ENCODE measurements at regions of chr3 and their contacts with region 1.

Region 1: DNA sequence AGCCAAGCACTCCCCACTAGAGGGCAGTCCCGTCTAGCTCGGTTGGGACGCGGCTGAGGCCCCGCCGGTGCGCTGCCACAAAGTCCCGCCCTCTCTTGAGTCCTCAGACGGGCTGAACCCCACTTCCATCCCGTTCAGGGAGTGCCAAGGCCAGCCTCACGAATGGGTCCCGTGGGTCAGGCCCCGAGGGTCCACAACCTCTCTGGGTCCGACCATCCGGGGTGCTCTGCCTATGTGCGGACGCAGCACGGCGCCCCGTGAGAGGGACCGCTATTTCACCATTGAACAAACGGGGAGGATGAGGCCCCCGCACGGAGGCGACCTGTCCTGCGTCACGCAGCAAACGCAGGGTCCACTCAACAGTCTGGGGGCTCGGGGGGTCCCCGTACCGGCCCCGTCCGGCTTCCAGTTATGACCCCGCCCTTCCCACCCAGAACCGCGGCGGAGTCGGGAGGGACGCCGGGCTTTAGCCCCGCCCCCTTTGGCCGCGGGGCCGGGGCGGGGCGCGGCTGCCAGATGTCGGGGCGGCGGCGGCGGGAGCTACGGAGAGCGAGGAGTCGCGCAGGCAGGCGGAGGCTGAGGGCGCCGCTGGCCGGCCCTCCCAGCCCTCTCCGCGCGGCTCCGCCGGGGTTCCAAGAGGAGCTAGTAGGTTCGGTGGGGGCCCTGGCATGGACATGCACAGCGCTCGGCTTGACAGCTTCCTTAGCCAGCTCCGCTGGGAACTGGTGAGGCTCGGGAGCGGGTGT is at the start of gene INKA1:
- DNase-seq: peak; percentile 95
- ATAC-seq: peak; percentile 90
- H3K4me3 ChIP-seq: peak within 1 kb of the TSS; percentile 91
- H3K27ac ChIP-seq: peak within 1 kb of the TSS; percentile 87
- H3K4me1 ChIP-seq: peaks cover 42% of the 10 kb centered on the region
- H3K27me3 ChIP-seq: no peaks in the 10 kb centered on the region
- CTCF ChIP-seq: peak; percentile 6
- total RNA-seq, gene INKA1: 6.6 TPM

Region 2: GRCh38 chr3:49519296-49519695 is 283.6 kb before region 1 on chr3:
- intact Hi-C with region 1: no loop called
- DNase-seq: no peak
- ATAC-seq: no peak
- H3K4me3 ChIP-seq: no peak overlapping the region
- H3K27ac ChIP-seq: no peak overlapping the region
- H3K4me1 ChIP-seq: peaks cover 16% of the 10 kb centered on the region
- H3K27me3 ChIP-seq: no peaks in the 10 kb centered on the region
- CTCF ChIP-seq: no peak

Region 3: DNA sequence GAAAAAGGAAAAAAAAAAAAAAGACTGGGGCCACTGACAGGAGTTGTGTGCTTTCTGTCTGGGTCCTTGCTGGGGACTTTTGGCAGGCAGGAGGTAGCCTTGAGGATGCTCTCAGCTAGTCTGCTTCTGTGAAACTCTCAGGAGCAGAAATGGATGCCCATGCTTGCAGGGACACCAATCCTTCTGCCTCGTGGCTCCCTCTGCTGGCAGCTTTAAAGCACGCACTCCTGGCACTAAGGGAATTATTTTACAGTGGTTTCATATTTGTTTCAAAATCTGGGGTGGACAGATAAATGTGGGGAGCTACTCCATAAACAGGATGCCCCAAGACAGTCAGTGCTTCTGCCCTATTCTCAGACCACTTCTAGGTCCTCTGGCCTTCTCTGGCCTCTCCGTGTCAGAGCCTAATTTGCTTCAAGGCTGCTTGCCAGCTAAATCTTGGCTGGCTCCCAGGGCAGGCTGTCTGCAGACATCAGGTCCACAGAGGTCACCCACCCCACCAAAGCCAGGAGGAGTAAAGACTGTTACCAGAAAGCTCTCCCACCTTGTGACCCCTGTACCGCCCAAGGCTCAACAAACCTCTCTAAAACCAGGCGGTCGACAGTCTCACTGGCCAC is 36.4 kb after region 1 on chr3:
- intact Hi-C with region 1: loop called (anchors 5 kb)
- DNase-seq: peak; percentile 86
- ATAC-seq: peak; percentile 94
- H3K4me3 ChIP-seq: no peak overlapping the region
- H3K27ac ChIP-seq: no peak overlapping the region
- H3K4me1 ChIP-seq: peaks cover 13% of the 10 kb centered on the region
- H3K27me3 ChIP-seq: no peaks in the 10 kb centered on the region
- CTCF ChIP-seq: peak; percentile 91

Region 4: GRCh38 chr3:49912881-49913281 is 110.0 kb after region 1 on chr3:
- intact Hi-C with region 1: loop called (anchors 10 kb)
- DNase-seq: no peak
- ATAC-seq: no peak
- H3K4me3 ChIP-seq: no peak overlapping the region
- H3K27ac ChIP-seq: no peak overlapping the region
- H3K4me1 ChIP-seq: no peaks in the 10 kb centered on the region
- H3K27me3 ChIP-seq: no peaks in the 10 kb centered on the region
- CTCF ChIP-seq: no peak

Measured in upper lobe of right lung (tissue), 1 donor.